Activated CD4-positive, alpha-beta memory T cell treated with anti-CD3 and anti-CD28 coated beads for 36 hours (primary cell): ENCODE measurements at regions of chr2 and their contacts with region 1.

Region 1: GRCh38 chr2:203706403-203706802 is at the start of gene CD28:
- DNase-seq: peak; percentile 97
- H3K4me3 Mint-ChIP-seq: peak within 1 kb of the TSS; percentile 86
- H3K27ac Mint-ChIP-seq: peak within 1 kb of the TSS; percentile 99
- H3K4me1 Mint-ChIP-seq: peaks cover 49% of the 10 kb centered on the region
- H3K27me3 Mint-ChIP-seq: no peaks in the 10 kb centered on the region
- total RNA-seq, gene CD28: 279 to 285 TPM

Region 2: DNA sequence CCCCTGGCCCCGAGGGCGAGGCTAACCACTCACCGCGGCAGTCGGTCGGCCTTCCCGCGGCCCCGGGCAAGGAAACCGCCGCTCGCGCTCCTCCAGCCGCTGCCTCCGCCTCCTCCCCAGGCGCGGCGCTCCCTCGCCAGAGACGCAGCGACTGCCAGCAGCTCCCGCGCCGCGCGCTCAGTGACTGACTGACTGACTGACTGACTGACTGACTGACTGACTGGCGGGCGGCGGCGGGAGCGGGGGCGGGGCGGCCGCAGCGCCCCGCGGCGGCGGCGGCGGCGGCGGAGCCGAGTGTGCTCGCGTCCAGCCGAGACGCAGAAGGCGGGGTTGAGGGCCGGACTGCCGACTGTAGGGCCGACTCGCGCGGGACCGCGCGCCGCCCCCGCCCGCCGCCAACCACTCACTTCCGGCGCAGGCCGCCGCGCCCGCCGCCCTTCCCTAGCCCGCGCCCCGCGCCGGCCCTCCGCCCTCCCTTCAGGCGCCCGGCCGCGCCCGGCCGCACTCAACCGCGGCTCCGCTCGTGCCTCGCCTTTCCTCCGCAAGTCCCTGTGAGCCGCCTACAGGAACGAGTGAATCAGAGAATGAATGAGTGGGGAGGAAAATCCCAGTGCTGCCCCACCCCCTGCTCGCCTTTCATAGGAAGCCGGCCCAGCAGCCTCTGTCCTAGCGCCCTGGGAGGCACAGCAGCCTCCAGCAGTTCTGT is 171.2 kb before region 1 on chr2 and contains the start of gene RAPH1:
- CTCF ChIA-PET with region 1: no interaction called
- POLR2A ChIA-PET with region 1: no interaction called
- intact Hi-C with region 1: loop called (anchors 2 kb)
- DNase-seq: peak; percentile 79
- H3K4me3 Mint-ChIP-seq: peak within 1 kb of the TSS; percentile 82
- H3K27ac Mint-ChIP-seq: peak within 1 kb of the TSS; percentile 67
- H3K4me1 Mint-ChIP-seq: peaks cover 31% of the 10 kb centered on the region
- H3K27me3 Mint-ChIP-seq: peaks cover 14% of the 10 kb centered on the region
- total RNA-seq, gene RAPH1: 11.5 to 13.1 TPM

Region 3: DNA sequence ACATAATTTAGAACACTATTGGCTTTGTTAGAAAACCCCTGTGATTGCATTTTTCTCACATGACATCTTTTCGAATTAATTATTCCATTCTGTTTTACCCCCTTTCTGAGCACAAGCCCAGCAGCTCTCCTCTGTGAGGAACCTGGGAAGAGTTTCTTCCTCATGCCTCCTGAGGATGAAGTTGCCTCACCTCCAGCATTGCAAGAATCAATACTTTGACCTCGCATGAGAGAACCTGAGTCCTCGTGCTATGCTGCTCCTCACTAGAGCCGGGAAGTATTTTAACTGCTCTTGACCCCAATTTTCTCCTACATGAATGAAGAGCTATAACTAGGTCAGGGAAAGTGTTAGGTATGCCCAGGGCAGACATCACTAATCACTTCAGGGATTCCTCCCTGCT is 94.1 kb before region 1 on chr2:
- CTCF ChIA-PET with region 1: no interaction called
- POLR2A ChIA-PET with region 1: no interaction called
- intact Hi-C with region 1: no loop called
- DNase-seq: no peak
- H3K4me3 Mint-ChIP-seq: no peak overlapping the region
- H3K27ac Mint-ChIP-seq: no peak overlapping the region
- H3K4me1 Mint-ChIP-seq: peaks cover 5% of the 10 kb centered on the region
- H3K27me3 Mint-ChIP-seq: no peaks in the 10 kb centered on the region

Region 4: GRCh38 chr2:203667838-203668237 is 38.6 kb before region 1 on chr2:
- CTCF ChIA-PET with region 1: no interaction called
- POLR2A ChIA-PET with region 1: no interaction called
- intact Hi-C with region 1: no loop called
- DNase-seq: no peak
- H3K4me3 Mint-ChIP-seq: no peak overlapping the region
- H3K27ac Mint-ChIP-seq: no peak overlapping the region
- H3K4me1 Mint-ChIP-seq: peaks cover 6% of the 10 kb centered on the region
- H3K27me3 Mint-ChIP-seq: no peaks in the 10 kb centered on the region

Region 5: GRCh38 chr2:203683932-203684556 is 22.4 kb before region 1 on chr2:
- CTCF ChIA-PET with region 1: no interaction called
- POLR2A ChIA-PET with region 1: no interaction called
- intact Hi-C with region 1: no loop called
- DNase-seq: peak; percentile 76
- H3K4me3 Mint-ChIP-seq: no peak overlapping the region
- H3K27ac Mint-ChIP-seq: peak overlapping the region; percentile 11
- H3K4me1 Mint-ChIP-seq: peaks cover 30% of the 10 kb centered on the region
- H3K27me3 Mint-ChIP-seq: no peaks in the 10 kb centered on the region

Region 6: DNA sequence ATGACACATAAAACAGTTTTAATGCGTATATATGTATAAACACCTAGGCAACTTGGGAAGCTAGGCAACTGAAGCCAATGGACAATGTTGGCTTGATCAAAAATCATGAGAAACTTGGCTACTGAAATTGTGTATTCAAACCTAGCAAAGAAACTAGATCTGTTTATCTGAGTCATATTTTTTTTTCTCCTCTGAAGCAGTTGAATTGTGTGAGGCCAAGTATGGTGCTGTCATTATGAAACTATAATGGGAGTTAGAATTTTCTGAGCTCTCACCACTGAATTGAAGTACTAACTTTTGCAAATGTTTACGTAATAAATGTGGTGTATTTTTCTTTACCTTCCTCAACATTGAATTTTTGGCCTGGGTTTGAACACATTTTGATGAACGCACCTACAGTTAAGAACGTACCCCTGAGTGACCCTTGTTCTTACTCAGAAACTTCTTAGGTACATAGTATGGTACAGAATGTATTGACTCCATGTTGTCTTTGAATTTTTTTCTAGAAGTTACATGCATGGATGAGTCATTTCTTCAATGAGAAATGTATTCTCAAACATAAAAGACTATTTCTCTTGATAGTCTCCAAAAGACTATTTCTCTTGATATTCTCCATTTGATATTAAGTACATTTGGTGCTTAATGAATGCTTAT is 23.8 kb after region 1 on chr2:
- CTCF ChIA-PET with region 1: interaction called, 3 read pairs
- POLR2A ChIA-PET with region 1: interaction called, 196 read pairs
- intact Hi-C with region 1: loop called (anchors 1 kb)
- DNase-seq: no peak
- H3K4me3 Mint-ChIP-seq: peak overlapping the region; percentile 47
- H3K27ac Mint-ChIP-seq: peak overlapping the region; percentile 99
- H3K4me1 Mint-ChIP-seq: peaks cover 93% of the 10 kb centered on the region
- H3K27me3 Mint-ChIP-seq: no peaks in the 10 kb centered on the region

Region 7: DNA sequence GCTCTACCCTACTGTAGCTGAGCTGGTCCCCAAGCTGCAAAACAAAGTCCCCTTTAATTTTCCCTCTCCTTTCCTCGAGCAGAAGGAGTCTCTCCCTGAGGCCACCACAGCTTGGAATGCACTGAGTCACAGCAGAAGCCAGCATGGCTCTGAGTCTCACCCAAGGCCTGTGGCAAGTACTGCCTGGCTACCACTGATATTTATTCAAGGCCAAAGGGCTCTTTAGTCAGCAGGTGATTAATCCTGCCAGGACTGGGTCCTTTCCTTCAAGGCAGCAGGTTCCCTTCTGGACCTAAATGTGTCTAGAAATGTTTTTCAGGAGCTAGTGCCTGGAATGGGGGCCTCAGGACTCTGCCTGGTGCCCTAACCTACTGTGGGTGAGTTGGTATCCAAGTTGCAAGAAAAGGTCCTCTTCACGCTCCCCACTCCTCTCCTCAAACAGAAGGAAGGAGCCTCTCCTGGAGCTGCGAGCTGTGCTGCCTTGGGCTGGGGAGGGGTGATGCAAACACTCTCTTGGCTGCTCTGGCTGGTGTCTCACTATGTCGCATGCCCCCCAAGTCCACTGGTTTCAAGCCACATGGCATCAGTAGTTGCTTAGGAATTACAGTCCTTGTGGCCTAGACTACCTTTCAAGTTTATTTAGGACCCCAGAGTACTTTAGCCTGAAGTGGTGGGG is 53.4 kb after region 1 on chr2:
- CTCF ChIA-PET with region 1: interaction called, 3 read pairs
- POLR2A ChIA-PET with region 1: interaction called, 6 read pairs
- intact Hi-C with region 1: loop called (anchors 1 kb)
- DNase-seq: no peak
- H3K4me3 Mint-ChIP-seq: no peak overlapping the region
- H3K27ac Mint-ChIP-seq: no peak overlapping the region
- H3K4me1 Mint-ChIP-seq: peaks cover 63% of the 10 kb centered on the region
- H3K27me3 Mint-ChIP-seq: no peaks in the 10 kb centered on the region

Region 8: GRCh38 chr2:203934041-203934492 is 227.7 kb after region 1 on chr2:
- CTCF ChIA-PET with region 1: no interaction called
- POLR2A ChIA-PET with region 1: interaction called, 127 read pairs
- intact Hi-C with region 1: loop called (anchors 1 kb)
- DNase-seq: peak; percentile 76
- H3K4me3 Mint-ChIP-seq: peak overlapping the region; percentile 74
- H3K27ac Mint-ChIP-seq: peak overlapping the region; percentile 94
- H3K4me1 Mint-ChIP-seq: peaks cover 59% of the 10 kb centered on the region
- H3K27me3 Mint-ChIP-seq: no peaks in the 10 kb centered on the region